Dorsolateral prefrontal cortex (tissue), 120 donors: ENCODE measurements at regions of chr7 and their contacts with region 1.

Region 1: GRCh38 chr7:120799813-120800475 is 58.0 kb downstream of the TSPAN12 start:
- DNase-seq: no peak
- H3K4me3 ChIP-seq: no peak overlapping the region
- H3K27ac ChIP-seq: no peak overlapping the region
- H3K27me3 ChIP-seq: no peaks in the 10 kb centered on the region
- CTCF ChIP-seq: no peak

Region 2: DNA sequence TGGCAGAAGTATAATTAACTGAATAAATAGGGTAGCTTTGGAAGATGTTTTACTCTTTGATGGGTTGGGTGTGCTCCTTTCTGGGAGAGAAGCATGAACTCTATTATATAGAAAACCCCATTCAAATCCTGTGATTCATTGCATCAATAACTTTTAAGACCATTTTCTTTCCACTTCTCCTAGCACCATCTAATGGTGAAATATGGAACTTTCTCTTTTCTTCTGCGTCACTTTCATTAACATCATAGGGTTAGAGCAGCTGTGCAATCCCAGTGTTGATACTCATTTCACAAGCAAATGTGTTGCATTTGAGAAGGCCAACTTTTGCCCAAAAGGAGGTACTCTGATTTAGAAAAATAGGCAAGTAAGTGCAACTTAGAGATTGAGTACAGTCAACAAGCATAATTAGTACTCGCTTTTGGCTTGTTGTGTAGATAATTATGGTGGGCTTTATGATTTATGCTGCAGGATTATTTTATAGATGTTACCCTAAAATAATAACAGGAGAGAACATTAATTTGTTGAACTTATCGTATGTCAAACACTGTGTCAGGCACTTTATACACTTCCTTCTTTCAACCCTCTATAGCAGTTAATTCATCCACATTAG is 281.5 kb after region 1 on chr7:
- intact Hi-C with region 1: loop called (anchors 5 to 10 kb)
- DNase-seq: no peak
- H3K4me3 ChIP-seq: no peak overlapping the region
- H3K27ac ChIP-seq: no peak overlapping the region
- H3K27me3 ChIP-seq: no peaks in the 10 kb centered on the region
- CTCF ChIP-seq: peak; percentile 56 to 92 (median 78)